Breast epithelium (tissue), 4 donors: ENCODE measurements at regions of chr2 and their contacts with region 1.

Region 1: DNA sequence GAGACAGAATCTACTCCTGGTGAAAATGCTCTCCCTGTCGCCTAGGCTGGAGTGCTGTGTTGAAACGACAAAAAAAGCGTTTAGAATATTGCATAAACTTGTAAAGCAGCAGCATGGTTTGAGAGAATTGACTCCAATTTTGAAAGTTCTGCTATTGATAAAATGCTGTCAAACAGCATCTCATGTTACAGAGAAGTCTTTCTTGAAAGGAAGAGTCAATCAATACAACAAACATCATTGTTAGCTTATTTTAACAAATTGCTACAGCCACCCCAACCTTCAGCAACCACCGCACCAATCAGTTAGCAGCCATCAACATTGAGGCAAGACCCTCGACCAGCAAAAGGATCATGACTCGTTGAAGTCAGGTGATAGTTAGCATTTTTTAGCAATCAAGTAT is 6.9 kb downstream of the C2orf76 start:
- DNase-seq: no peak
- H3K4me3 ChIP-seq: no peak overlapping the region
- H3K27ac ChIP-seq: no peak overlapping the region
- H3K4me1 ChIP-seq: no peaks in the 10 kb centered on the region
- H3K27me3 ChIP-seq: no peaks in the 10 kb centered on the region
- CTCF ChIP-seq: no peak
- POLR2A ChIP-seq: no peak

Region 2: GRCh38 chr2:119387381-119388129 is 27.8 kb after region 1 on chr2:
- intact Hi-C with region 1: loop called (anchors 2 kb)
- DNase-seq: peak; percentile 66 to 86
- H3K4me3 ChIP-seq: no peak overlapping the region
- H3K27ac ChIP-seq: peak overlapping the region; percentile 78 to 86
- H3K4me1 ChIP-seq: peaks cover 3 to 22% of the 10 kb centered on the region in 2 donors
- H3K27me3 ChIP-seq: no peaks in the 10 kb centered on the region
- CTCF ChIP-seq: peak in 1 of 3 donors; percentile 7
- POLR2A ChIP-seq: no peak

Region 3: GRCh38 chr2:119464981-119465380 is 105.2 kb after region 1 on chr2:
- intact Hi-C with region 1: no loop called
- DNase-seq: no peak
- H3K4me3 ChIP-seq: no peak overlapping the region
- H3K27ac ChIP-seq: no peak overlapping the region
- H3K4me1 ChIP-seq: no peaks in the 10 kb centered on the region
- H3K27me3 ChIP-seq: no peaks in the 10 kb centered on the region
- CTCF ChIP-seq: no peak
- POLR2A ChIP-seq: no peak